ENCODE measurements at regions of chr9 and their contacts with region 1.

Region 1: GRCh38 chr9:125325831-125326230 is 64.2 kb downstream of the GAPVD1 start:
- DNase-seq: no peak

Region 2: DNA sequence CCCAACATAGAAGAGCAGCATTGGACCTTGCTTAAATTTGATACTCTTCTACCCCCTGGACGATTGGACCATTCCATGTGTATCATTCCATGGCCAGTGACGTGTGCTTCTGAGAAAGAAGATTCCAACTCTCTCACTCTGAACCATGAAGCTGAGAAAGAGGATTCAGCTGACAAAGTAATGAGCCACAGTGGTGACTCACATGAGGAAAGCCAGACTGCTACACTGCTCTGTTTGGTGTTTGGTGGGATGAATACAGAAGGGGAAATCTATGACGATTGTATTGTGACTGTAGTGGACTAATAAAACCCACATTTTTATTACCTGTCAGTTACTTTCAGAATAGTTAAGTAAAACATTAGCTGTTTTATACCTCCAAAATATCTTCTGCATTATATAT is 92.2 kb before region 1 on chr9:
- intact Hi-C with region 1: loop called in 1 of 2 experiments (anchors 10 kb)
- DNase-seq: no peak

Region 3: DNA sequence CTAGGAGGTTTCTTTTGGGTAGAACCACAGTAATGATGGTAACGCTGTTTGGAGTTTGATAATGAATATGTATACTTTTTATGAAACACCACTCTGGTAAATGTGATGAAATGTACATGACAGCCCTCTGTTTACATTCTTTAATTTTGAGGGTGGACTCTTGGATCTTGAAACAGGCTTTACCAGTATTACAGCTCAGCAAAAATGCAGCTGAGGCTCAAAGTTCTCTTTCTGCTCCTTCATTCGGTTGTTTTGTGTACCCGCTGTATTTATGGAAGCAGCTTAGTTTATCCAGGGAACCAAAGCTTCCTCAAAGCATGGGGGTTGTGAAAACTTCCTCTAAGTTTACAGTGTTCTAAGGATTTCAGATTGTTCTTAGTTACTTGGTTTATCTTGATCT is 53.1 kb before region 1 on chr9:
- intact Hi-C with region 1: no loop called
- DNase-seq: no peak

Region 4: GRCh38 chr9:125293134-125293533 is 32.7 kb before region 1 on chr9:
- intact Hi-C with region 1: no loop called
- DNase-seq: no peak